Panc1 (cell line): ENCODE measurements at regions of chr5 and their contacts with region 1.

Region 1: GRCh38 chr5:152379331-152379730 is 25.7 kb downstream of the NMUR2 start:
- DNase-seq: no peak
- ATAC-seq: no peak
- H3K4me3 ChIP-seq: no peak overlapping the region
- H3K27ac ChIP-seq: no peak overlapping the region
- H3K4me1 ChIP-seq: no peaks in the 10 kb centered on the region
- H3K27me3 ChIP-seq: no peaks in the 10 kb centered on the region
- CTCF ChIP-seq: no peak; the same call in 1 of the 2 replicates

Region 2: DNA sequence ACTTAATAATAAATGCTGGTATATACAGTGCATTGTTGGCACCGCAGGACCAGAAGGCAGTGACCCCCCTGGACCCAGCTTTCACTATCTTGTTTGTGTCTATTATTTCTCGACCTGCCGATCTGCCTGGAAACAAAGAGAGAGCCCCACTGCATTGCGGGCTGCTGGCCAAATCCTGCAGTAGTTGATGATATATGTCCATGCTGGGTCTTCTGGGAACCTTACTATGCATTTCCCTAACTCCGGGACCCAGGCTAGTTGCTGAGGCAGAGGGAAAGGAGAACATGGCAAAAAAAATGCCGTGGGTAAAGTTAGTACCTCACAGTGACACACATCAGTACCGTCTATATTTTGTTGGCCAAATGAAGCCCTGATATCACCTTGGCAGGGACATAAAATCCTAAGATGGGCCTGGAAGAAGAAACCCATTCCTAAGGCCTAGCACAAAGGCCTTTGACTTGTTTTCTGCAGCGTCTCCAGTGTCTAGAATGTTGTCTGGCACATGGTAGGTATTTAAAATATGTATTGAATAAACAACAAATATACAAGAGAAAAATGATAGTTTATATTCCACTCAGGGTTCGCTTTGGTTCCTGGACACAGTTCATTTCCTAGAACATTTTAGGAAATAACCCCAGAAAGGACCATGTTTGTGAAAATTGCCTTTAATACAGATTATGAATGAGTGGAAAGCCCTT is 20.3 kb before region 1 on chr5:
- CTCF ChIA-PET with region 1: no interaction called
- POLR2A ChIA-PET with region 1: no interaction called
- in situ Hi-C with region 1: no loop called
- intact Hi-C with region 1: no loop called
- DNase-seq: no peak
- ATAC-seq: no peak
- H3K4me3 ChIP-seq: no peak overlapping the region
- H3K27ac ChIP-seq: no peak overlapping the region
- H3K4me1 ChIP-seq: no peaks in the 10 kb centered on the region
- H3K27me3 ChIP-seq: no peaks in the 10 kb centered on the region
- CTCF ChIP-seq: no peak

Region 3: DNA sequence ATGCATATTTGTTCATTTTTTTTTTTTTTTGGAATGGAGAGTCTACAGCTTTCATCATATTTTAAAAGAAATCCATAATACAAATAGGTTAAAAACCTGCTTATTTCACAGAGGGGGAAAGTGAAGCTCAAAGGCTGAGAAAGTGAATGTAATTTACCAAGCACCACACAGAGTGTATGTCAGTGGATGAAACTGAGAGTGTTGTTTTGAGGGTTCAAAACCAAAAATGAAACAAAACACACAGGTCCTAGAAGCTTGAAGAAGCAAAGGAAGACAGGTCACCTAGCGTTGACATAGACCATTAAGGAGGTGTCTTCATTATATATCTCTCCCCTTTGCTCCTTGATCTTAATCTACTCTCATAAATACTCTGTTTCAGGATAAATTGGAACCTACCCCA is 18.2 kb after region 1 on chr5:
- CTCF ChIA-PET with region 1: no interaction called
- POLR2A ChIA-PET with region 1: interaction called, 13 read pairs
- in situ Hi-C with region 1: no loop called
- intact Hi-C with region 1: no loop called
- DNase-seq: no peak
- ATAC-seq: no peak
- H3K4me3 ChIP-seq: no peak overlapping the region
- H3K27ac ChIP-seq: no peak overlapping the region
- H3K4me1 ChIP-seq: no peaks in the 10 kb centered on the region
- H3K27me3 ChIP-seq: no peaks in the 10 kb centered on the region
- CTCF ChIP-seq: no peak

Region 4: GRCh38 chr5:152505442-152506042 is 126.2 kb after region 1 on chr5:
- CTCF ChIA-PET with region 1: no interaction called
- POLR2A ChIA-PET with region 1: no interaction called
- in situ Hi-C with region 1: no loop called
- intact Hi-C with region 1: loop called (anchors 5 kb)
- DNase-seq: peak; percentile 25
- ATAC-seq: peak; percentile 93
- H3K4me3 ChIP-seq: no peak overlapping the region
- H3K27ac ChIP-seq: no peak overlapping the region
- H3K4me1 ChIP-seq: no peaks in the 10 kb centered on the region
- H3K27me3 ChIP-seq: no peaks in the 10 kb centered on the region
- CTCF ChIP-seq: peak; percentile 76

Region 5: DNA sequence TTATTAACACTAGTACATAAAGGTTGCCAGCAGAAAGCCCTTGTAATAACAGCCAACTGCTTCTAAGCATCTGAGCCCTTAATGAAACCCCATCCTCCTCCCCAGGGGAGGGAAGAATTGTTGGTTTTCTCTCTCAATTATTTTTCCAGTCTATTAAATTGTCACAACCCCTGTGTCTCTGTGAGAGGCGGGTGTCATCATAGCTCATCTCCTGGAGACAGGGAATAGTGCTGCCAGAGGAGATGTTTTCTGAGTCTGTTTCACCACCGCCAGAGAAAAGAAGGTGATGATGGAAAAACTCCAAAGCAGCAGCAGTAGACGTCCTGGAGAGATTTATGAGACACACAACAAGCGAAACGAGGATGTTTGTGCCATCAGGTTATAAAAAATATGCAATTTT is 296.9 kb after region 1 on chr5:
- CTCF ChIA-PET with region 1: no interaction called
- POLR2A ChIA-PET with region 1: no interaction called
- in situ Hi-C with region 1: no loop called
- intact Hi-C with region 1: no loop called
- DNase-seq: no peak
- ATAC-seq: no peak
- H3K4me3 ChIP-seq: no peak overlapping the region
- H3K27ac ChIP-seq: no peak overlapping the region
- H3K4me1 ChIP-seq: no peaks in the 10 kb centered on the region
- H3K27me3 ChIP-seq: no peaks in the 10 kb centered on the region; the same call in 1 of the 2 replicates
- CTCF ChIP-seq: no peak

Region 6: GRCh38 chr5:152723482-152723881 is 344.2 kb after region 1 on chr5:
- CTCF ChIA-PET with region 1: no interaction called
- POLR2A ChIA-PET with region 1: no interaction called
- in situ Hi-C with region 1: no loop called
- intact Hi-C with region 1: no loop called
- DNase-seq: no peak
- ATAC-seq: no peak
- H3K4me3 ChIP-seq: no peak overlapping the region
- H3K27ac ChIP-seq: no peak overlapping the region
- H3K4me1 ChIP-seq: no peaks in the 10 kb centered on the region
- H3K27me3 ChIP-seq: no peaks in the 10 kb centered on the region
- CTCF ChIP-seq: no peak